Activated naive CD8-positive, alpha-beta T cell treated with anti-CD3 and anti-CD28 coated beads, Interleukin-2, amount 10 ng/mL, durations not matched to agents 7 days and 5 days (primary cell): ENCODE measurements at regions of chr17 and their contacts with region 1.

Region 1: DNA sequence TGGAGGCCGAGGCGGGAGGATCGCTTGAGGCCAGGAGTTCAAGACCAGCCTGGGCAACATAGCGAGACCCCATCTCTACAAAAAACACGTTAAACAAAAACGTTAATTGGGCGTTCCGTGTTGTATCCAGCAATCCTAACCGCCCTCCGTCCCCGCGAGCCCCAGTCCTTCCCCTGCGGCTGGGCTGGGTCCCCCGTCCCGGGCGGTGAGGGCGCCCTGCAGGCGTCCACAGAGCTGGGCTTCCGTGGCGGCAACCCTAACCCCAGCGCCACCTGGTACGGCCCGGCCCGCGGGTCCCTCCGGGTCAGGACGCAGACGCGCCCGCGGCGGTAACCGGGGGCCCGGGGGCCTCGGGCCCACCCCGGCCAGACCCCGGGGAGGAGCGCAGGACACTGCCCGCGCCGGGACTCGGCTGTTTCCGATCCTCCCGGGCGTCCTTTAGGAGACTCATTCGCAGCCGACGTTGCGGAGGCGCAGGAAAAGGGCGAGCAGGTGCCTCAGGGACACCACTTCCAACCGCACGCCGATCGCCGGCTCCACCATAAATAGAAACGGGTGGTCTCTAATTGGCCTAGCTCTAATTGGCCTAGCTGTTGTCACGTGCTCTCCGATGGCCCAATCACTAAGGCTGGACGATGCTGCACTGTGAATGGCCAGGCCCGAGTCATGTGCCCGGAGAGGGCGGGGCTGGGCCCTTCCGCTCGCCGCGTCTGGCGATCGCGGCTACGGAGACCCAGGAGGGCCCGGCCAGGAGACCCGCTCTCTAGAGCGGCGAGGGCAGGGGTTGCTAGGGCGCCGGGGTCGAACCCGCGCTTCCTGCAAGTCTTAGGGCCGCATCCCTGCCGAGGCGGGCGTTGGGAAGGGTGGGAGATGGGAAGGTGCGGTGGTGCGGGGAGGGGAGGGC is 19.0 kb upstream of the CSNK1D start:
- DNase-seq: peak; percentile 92
- ATAC-seq: peak; percentile 94
- H3K4me3 Mint-ChIP-seq: peak overlapping the region; percentile 87
- H3K27ac Mint-ChIP-seq: peak overlapping the region; percentile 91
- H3K4me1 Mint-ChIP-seq: peaks cover 35% of the 10 kb centered on the region
- H3K27me3 Mint-ChIP-seq: no peaks in the 10 kb centered on the region

Region 2: DNA sequence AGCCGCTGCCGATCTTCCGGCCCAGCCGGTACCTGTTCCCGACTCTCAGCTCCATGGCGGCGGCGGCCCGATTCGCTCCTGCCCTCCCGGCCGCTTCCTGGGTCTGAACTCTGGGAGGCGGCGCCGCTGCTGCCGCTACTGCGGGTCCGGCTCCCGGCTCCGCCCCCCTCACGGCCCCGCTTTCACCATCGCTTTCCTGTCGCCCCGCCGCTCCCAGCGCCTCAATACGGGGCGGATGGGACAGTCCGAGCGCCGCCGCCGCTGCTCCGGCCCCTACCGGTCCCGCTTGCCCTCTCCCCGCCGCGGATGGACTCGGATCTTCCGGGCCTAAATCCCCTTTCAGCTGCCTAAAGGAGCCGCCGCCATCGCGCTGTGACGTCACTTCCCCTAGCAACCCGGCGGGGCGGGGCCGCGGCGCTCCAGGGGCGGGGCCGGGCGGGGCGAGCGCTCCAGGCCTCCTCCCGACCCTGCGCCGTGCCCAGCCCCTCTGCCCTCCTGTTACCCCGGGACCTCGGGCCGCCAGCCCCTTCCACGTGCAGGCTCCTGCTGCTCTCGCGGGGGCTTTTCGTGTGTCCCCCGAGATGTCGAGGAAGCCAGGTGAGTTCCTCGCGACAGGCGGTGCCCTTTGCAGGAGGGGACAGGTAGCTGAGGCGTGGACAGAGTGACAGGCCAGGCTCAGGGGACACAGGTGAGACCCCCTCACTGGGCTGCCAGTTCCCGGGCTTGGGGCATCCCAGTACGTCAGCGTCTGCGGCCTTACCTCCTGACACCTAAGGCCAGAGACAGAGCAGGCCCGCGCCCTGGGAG is 19.0 kb before region 1 on chr17 and contains the start of gene CSNK1D:
- POLR2A ChIA-PET with region 1: interaction called, 37 read pairs
- DNase-seq: peak; percentile 97
- ATAC-seq: peak; percentile 73
- H3K4me3 Mint-ChIP-seq: peak within 1 kb of the TSS; percentile 91
- H3K27ac Mint-ChIP-seq: peak within 1 kb of the TSS; percentile 99
- H3K4me1 Mint-ChIP-seq: peaks cover 29% of the 10 kb centered on the region
- H3K27me3 Mint-ChIP-seq: no peaks in the 10 kb centered on the region
- total RNA-seq, gene CSNK1D: 135 to 140 TPM

Region 3: GRCh38 chr17:82315703-82316358 is 23.3 kb after region 1 on chr17:
- POLR2A ChIA-PET with region 1: interaction called, 222 read pairs
- DNase-seq: peak; percentile 72
- ATAC-seq: peak; percentile 45
- H3K4me3 Mint-ChIP-seq: peak overlapping the region; percentile 90
- H3K27ac Mint-ChIP-seq: no peak overlapping the region
- H3K4me1 Mint-ChIP-seq: peaks cover 9% of the 10 kb centered on the region
- H3K27me3 Mint-ChIP-seq: no peaks in the 10 kb centered on the region